PC-3 (cell line): ENCODE measurements at regions of chr2 and their contacts with region 1.

Region 1: DNA sequence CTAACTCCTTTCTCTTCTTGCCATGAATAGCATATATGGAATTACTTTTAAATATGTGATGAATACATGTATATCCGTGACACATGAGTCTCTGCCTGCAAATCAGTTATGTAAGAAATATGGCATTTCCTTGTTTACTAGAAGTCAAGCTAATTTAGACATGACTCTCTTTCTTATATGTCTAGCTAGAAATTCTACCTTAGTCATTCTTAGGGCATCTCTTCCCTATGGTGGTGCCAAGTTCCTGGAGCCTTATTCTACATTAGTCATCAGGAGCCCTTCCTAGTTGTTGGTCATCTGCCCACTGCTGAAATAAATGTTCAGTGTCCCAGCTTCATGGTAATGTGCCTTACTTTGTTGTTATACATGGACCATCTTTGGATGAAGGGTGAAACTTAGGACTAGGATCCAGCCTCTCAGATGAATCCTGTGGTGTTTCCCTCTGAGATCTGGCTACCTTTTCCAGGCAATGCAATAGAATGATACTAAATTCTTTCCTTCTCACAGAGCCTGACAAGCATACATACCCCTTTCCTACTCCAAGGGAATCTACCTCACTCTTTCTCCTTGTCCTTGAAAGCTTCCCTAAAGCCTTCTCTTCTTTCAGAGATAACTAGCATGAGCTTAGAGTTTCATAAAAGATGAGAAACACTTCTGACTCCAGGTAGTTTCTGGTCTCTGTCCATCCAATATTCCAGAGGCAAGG is 415.3 kb upstream of the VWC2L start:
- DNase-seq: peak; percentile 95
- ATAC-seq: peak; percentile 98
- H3K4me3 ChIP-seq: no peak overlapping the region
- H3K27ac ChIP-seq: peak overlapping the region; percentile 61
- H3K4me1 ChIP-seq: peaks cover 17% of the 10 kb centered on the region
- H3K27me3 ChIP-seq: no peaks in the 10 kb centered on the region
- CTCF ChIP-seq: no peak

Region 2: GRCh38 chr2:214019229-214019972 is 23.8 kb after region 1 on chr2:
- CTCF ChIA-PET with region 1: no interaction called
- POLR2A ChIA-PET with region 1: no interaction called
- intact Hi-C with region 1: loop called (anchors 1 kb)
- DNase-seq: peak; percentile 95
- ATAC-seq: peak; percentile 97
- H3K4me3 ChIP-seq: no peak overlapping the region
- H3K27ac ChIP-seq: peak overlapping the region; percentile 72
- H3K4me1 ChIP-seq: peaks cover 23% of the 10 kb centered on the region
- H3K27me3 ChIP-seq: no peaks in the 10 kb centered on the region
- CTCF ChIP-seq: no peak

Region 3: GRCh38 chr2:214244847-214245246 is 249.3 kb after region 1 on chr2:
- CTCF ChIA-PET with region 1: no interaction called
- POLR2A ChIA-PET with region 1: no interaction called
- intact Hi-C with region 1: loop called (anchors 2 kb)
- DNase-seq: peak; percentile 24
- ATAC-seq: peak; percentile 23; the same call in 1 of the 2 replicates
- H3K4me3 ChIP-seq: no peak overlapping the region
- H3K27ac ChIP-seq: no peak overlapping the region
- H3K4me1 ChIP-seq: peaks cover 12% of the 10 kb centered on the region
- H3K27me3 ChIP-seq: no peaks in the 10 kb centered on the region
- CTCF ChIP-seq: no peak